T-cell (primary cell): ENCODE measurements at regions of chr17 and their contacts with region 1.

Region 1: DNA sequence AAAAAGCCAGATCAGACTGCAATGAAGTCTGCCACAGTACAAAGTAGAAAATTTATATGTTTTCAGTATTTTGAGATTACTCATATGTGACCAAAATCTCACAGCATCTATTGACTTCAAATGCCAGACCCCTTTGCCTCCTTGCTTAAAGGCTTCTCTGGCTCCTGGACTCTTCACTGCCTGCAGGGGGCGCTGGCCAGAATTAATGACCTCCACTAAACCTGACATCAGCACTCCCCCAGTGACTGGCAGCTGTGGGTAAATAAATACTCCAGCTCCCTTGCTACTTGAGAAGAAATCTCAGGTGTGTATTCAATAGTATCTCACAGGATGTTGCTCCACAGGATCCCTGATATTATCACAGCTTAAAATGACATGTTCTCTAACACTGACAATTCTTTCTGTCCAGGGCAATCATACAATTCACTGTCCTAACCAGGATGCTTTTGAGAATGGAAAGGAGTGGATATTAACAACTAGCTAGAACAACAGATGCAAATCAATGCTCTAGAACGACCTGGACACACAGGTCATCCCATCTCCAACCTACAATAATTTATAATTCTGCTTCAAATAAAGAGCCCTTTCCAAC is 4.0 kb downstream of the BECN1 start:
- DNase-seq: peak in 32 of 35 experiments; percentile 12 to 75 (median 52)
- ATAC-seq: no peak
- H3K4me3 ChIP-seq: no peak overlapping the region
- H3K4me3 Mint-ChIP-seq: peak overlapping the region in 1 of 3 donors; percentile 1
- H3K27ac ChIP-seq: peak overlapping the region; percentile 5
- H3K27ac Mint-ChIP-seq: no peak overlapping the region
- H3K4me1 ChIP-seq: peaks cover 7 to 20% of the 10 kb centered on the region in 2 experiments
- H3K4me1 Mint-ChIP-seq: peaks cover 28 to 40% (median 39%) of the 10 kb centered on the region in 3 donors
- H3K27me3 ChIP-seq: no peaks in the 10 kb centered on the region
- H3K27me3 Mint-ChIP-seq: no peaks in the 10 kb centered on the region

Region 2: GRCh38 chr17:42514867-42515266 is 305.2 kb before region 1 on chr17:
- CTCF ChIA-PET with region 1: interaction called in 1 of 2 experiments, 10 read pairs
- POLR2A ChIA-PET with region 1: no interaction called
- DNase-seq: no peak
- ATAC-seq: no peak
- H3K4me3 ChIP-seq: no peak overlapping the region
- H3K4me3 Mint-ChIP-seq: no peak overlapping the region
- H3K27ac ChIP-seq: no peak overlapping the region
- H3K27ac Mint-ChIP-seq: no peak overlapping the region
- H3K4me1 ChIP-seq: peaks cover 2 to 6% of the 10 kb centered on the region in 2 experiments
- H3K4me1 Mint-ChIP-seq: peaks cover 5% of the 10 kb centered on the region in 3 donors
- H3K27me3 ChIP-seq: peaks cover 0 to 7% of the 10 kb centered on the region in 2 experiments
- H3K27me3 Mint-ChIP-seq: no peaks in the 10 kb centered on the region

Region 3: GRCh38 chr17:42832974-42833766 is 13.1 kb after region 1 on chr17 and contains the start of gene PSME3:
- CTCF ChIA-PET with region 1: interaction called in 1 of 2 experiments, 11 read pairs
- POLR2A ChIA-PET with region 1: interaction called, 4 to 9 read pairs
- DNase-seq: peak; percentile 75 to 92 (median 85)
- ATAC-seq: peak; percentile 92 to 95 (median 94)
- H3K4me3 ChIP-seq: peak within 1 kb of the TSS; percentile 92 to 95
- H3K4me3 Mint-ChIP-seq: peak within 1 kb of the TSS; percentile 94 to 97 (median 95)
- H3K27ac ChIP-seq: peak within 1 kb of the TSS; percentile 93
- H3K27ac Mint-ChIP-seq: peak within 1 kb of the TSS; percentile 95 to 99
- H3K4me1 ChIP-seq: peaks cover 11 to 18% of the 10 kb centered on the region in 2 experiments
- H3K4me1 Mint-ChIP-seq: peaks cover 22 to 32% (median 25%) of the 10 kb centered on the region in 3 donors
- H3K27me3 ChIP-seq: no peaks in the 10 kb centered on the region
- H3K27me3 Mint-ChIP-seq: peaks cover 0 to 1% of the 10 kb centered on the region in 2 donors
- total RNA-seq, gene PSME3: 68.0 to 79.1 (median 77.2) TPM

Region 4: GRCh38 chr17:42944211-42944610 is 124.2 kb after region 1 on chr17:
- CTCF ChIA-PET with region 1: no interaction called
- POLR2A ChIA-PET with region 1: no interaction called
- DNase-seq: no peak
- ATAC-seq: no peak
- H3K4me3 ChIP-seq: no peak overlapping the region
- H3K4me3 Mint-ChIP-seq: no peak overlapping the region
- H3K27ac ChIP-seq: no peak overlapping the region
- H3K27ac Mint-ChIP-seq: no peak overlapping the region
- H3K4me1 ChIP-seq: no peaks in the 10 kb centered on the region
- H3K4me1 Mint-ChIP-seq: no peaks in the 10 kb centered on the region
- H3K27me3 ChIP-seq: peaks cover 0 to 4% of the 10 kb centered on the region in 2 experiments
- H3K27me3 Mint-ChIP-seq: peaks cover 0 to 7% of the 10 kb centered on the region in 2 donors